ENCODE measurements at regions of chr6 and their contacts with region 1.

Region 1: GRCh38 chr6:138817822-138818308 is 22.0 kb downstream of the ECT2L start:
- DNase-seq: no peak
- H3K4me3 Mint-ChIP-seq: peak overlapping the region; percentile 61
- H3K27ac Mint-ChIP-seq: peak overlapping the region; percentile 94
- H3K4me1 Mint-ChIP-seq: peaks cover 41% of the 10 kb centered on the region
- H3K27me3 Mint-ChIP-seq: no peaks in the 10 kb centered on the region

Region 2: DNA sequence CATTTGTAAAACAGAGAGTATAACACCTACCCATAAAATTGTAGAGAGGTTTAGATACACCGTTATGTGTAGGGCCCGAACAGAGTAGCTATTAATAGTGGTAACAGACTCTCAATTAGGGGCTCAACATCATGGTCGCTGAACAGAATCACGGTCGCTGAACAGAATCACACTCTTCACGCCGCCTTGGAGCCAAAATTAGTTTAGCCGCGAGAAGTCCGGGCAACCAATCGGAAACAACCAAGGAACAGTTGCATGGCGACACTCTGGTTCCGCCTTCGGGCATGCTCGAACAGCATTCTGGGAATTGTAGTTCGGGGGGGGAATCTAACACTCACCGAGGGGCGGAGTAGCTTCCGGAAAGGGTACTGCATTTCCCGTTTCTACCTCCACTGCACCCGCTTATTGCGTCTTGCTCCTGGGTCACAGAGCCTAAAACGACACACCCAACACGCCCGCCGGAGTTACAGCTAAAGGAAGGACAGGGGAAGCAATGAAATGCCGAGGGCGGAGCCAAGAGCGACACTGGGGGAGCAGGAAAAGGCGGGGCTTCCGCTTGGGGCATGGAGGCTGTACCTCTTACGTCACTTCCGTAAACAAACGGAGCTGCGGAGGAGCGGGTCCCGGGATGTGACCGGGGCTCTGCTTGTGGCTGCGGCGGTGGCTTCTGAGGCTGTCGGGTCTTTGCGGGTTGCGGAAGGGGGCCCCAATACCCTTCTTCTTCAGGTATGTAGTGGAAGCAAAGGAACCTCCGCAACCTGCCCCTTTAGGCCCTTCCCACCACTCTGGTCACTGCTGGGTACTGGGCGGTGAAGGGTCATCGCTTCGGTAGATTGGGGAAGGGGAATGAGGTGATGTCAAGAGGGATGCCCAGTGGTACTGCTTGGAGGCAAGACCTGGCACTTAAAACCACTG is 44.4 kb before region 1 on chr6 and contains the start of gene CCDC28A:
- intact Hi-C with region 1: loop called (anchors 1 kb)
- DNase-seq: peak; percentile 92
- H3K4me3 Mint-ChIP-seq: peak within 1 kb of the TSS; percentile 97
- H3K27ac Mint-ChIP-seq: peak within 1 kb of the TSS; percentile 99
- H3K4me1 Mint-ChIP-seq: peaks cover 23% of the 10 kb centered on the region
- H3K27me3 Mint-ChIP-seq: no peaks in the 10 kb centered on the region
- total RNA-seq, gene CCDC28A: 18.2 and 19.2 TPM in 2 replicates

Region 3: GRCh38 chr6:138944412-138944811 is 126.5 kb after region 1 on chr6:
- intact Hi-C with region 1: loop called (anchors 1 kb)
- DNase-seq: no peak
- H3K4me3 Mint-ChIP-seq: no peak overlapping the region
- H3K27ac Mint-ChIP-seq: no peak overlapping the region
- H3K4me1 Mint-ChIP-seq: peaks cover 46% of the 10 kb centered on the region
- H3K27me3 Mint-ChIP-seq: no peaks in the 10 kb centered on the region

Region 4: GRCh38 chr6:139109558-139109957 is 291.7 kb after region 1 on chr6:
- intact Hi-C with region 1: loop called (anchors 5 kb)
- DNase-seq: no peak
- H3K4me3 Mint-ChIP-seq: no peak overlapping the region
- H3K27ac Mint-ChIP-seq: no peak overlapping the region
- H3K4me1 Mint-ChIP-seq: peaks cover 28% of the 10 kb centered on the region
- H3K27me3 Mint-ChIP-seq: no peaks in the 10 kb centered on the region

Region 5: DNA sequence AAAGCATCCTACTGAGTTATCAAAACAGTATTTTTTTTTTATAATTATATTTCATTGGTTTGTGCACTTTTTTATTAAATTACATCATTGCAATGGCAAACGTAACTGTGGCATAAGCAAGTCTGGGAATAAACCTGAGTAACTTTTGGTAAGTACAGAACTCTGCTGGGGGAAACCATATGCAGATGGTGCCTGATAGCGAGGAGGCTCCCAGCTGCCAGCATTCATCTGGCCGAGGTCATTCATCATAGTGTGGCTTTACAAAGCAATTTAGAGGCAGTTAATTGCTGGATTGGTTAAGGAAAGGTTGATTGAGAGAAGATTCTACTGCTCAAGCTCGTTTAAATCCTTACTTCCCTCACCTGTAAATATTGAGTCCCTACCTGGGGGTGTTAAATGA is 369.6 kb after region 1 on chr6:
- intact Hi-C with region 1: loop called (anchors 5 kb)
- DNase-seq: no peak
- H3K4me3 Mint-ChIP-seq: no peak overlapping the region
- H3K27ac Mint-ChIP-seq: no peak overlapping the region
- H3K4me1 Mint-ChIP-seq: peaks cover 29% of the 10 kb centered on the region
- H3K27me3 Mint-ChIP-seq: no peaks in the 10 kb centered on the region

Region 6: GRCh38 chr6:139364302-139364981 is 546.6 kb after region 1 on chr6:
- intact Hi-C with region 1: loop called (anchors 2 kb)
- DNase-seq: no peak
- H3K4me3 Mint-ChIP-seq: no peak overlapping the region
- H3K27ac Mint-ChIP-seq: no peak overlapping the region
- H3K4me1 Mint-ChIP-seq: peaks cover 24% of the 10 kb centered on the region
- H3K27me3 Mint-ChIP-seq: peaks cover 1% of the 10 kb centered on the region